ENCODE measurements at regions of chr14 and their contacts with region 1.

Region 1: DNA sequence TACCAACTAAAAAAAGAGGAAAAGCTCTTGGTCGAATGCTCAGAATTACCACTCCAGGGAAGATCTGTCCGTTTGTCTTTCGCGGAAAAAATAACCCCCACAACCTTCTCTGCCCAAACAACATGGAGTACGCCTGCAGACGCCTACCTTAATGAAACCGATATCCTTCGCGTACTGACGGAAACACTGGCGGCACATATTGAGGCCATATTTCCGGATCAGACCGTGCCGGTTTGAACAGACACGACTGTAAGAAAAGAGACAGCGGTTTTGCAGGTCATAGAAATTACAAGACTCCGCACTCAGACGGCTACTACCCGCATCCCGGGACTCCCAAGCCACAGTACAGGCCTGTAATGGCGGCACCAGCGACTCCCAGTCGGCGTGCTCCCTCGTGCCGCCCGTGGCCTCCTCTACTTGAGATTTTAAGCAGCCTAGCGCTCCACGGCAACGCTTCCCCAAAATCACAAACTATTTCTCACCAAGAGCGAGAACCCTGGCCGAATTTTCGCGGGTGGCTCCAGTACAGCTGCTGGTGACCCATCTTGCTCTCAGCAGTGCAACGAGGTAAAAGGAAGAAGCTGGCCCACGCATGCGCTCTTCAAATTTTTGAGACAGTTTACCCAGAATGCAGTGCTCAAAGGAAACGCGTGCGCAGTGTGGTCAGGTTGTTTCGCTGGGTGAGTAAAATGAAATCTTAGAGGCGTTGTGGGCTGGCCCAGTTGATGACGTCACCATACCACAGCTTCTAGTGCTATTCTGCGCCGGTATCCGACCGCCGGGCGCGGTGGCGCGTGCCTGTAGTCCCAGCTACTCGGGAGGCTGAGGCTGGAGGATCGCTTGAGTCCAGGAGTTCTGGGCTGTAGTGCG is at the start of gene RPS29:
- DNase-seq: peak; percentile 89
- H3K4me3 ChIP-seq: peak within 1 kb of the TSS; percentile 72 to 91
- H3K27ac ChIP-seq: peak within 1 kb of the TSS; percentile 82 to 84
- H3K4me1 ChIP-seq: peaks cover 3 to 7% of the 10 kb centered on the region in 2 experiments; a peak in 1 of 4 replicates
- H3K27me3 ChIP-seq: no peaks in the 10 kb centered on the region
- CTCF ChIP-seq: no peak
- EP300 ChIP-seq: peak in 1 of 2 experiments; percentile 28; a peak in 1 of 4 replicates
- RAD21 ChIP-seq: no peak
- polyA plus RNA-seq, gene RPS29: 11,220 and 15,074 TPM in 2 replicates

Region 2: GRCh38 chr14:49427117-49427516 is 158.9 kb before region 1 on chr14:
- CTCF ChIA-PET with region 1: no interaction called
- POLR2A ChIA-PET with region 1: no interaction called
- DNase-seq: no peak
- H3K4me3 ChIP-seq: no peak overlapping the region
- H3K27ac ChIP-seq: no peak overlapping the region
- H3K4me1 ChIP-seq: peaks cover 0 to 3% of the 10 kb centered on the region in 2 experiments; a peak in 1 of 4 replicates
- H3K27me3 ChIP-seq: no peaks in the 10 kb centered on the region
- CTCF ChIP-seq: no peak
- EP300 ChIP-seq: no peak
- RAD21 ChIP-seq: no peak

Region 3: DNA sequence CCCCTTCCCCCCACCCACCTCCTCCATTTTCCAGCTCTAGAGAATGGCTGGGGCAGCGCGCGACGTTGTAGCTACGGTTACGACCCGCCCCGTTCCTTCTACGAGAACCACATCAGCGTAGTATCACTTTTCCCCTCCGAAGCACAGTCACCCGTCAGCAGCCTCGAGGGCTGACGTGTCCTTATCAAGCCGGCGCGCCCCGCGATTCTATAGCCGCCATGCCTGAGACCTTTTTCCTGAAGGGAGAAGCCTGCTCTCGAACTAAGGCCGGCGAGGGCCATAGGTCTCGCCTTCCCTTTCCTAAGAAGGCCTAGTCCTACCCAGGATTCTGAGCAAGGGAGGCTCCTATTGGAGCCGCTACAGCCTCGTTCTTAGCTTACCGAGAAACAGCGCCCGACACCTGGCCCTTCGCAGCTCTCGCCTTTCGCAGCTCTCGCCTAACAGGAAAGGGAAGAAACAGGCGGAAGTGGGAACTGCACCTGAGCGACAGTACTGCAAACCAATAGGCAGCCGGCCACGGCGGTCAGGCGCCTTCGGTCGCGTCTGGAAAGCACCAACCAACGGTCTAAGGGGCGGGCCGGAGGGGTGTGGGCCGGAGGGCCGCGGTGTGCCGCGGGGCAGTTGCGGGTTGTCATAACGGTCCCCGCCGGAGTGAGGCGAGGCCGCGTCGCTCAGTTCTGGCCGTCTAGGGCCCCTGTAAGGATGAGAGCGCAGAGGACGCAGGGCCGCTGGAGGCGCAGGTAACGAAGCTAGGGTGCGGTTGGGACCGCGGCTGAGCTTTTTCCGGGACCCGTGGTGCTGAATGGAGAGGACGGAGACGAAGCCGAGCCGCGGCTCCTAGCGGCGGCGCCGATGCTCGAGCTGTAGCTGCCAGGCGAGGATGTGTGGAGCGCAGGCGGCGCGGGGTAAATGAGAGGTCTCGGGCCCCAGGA is 34.4 kb after region 1 on chr14 and contains the starts of genes MGAT2 and RPL36AL:
- CTCF ChIA-PET with region 1: interaction called, 22 read pairs
- POLR2A ChIA-PET with region 1: interaction called, 6 read pairs
- DNase-seq: peak; percentile 99
- H3K4me3 ChIP-seq: peak within 1 kb of the TSS; percentile 92 to 96
- H3K27ac ChIP-seq: peak within 1 kb of the TSS; percentile 97 to 98
- H3K4me1 ChIP-seq: peaks cover 22 to 29% of the 10 kb centered on the region in 2 experiments
- H3K27me3 ChIP-seq: no peaks in the 10 kb centered on the region
- CTCF ChIP-seq: peak; percentile 45
- EP300 ChIP-seq: no peak
- RAD21 ChIP-seq: no peak
- polyA plus RNA-seq, gene MGAT2: 20.6 and 22.0 TPM in 2 replicates
- polyA plus RNA-seq, gene RPL36AL: 260 and 337 TPM in 2 replicates

Region 4: GRCh38 chr14:49676482-49677082 is 90.5 kb after region 1 on chr14:
- CTCF ChIA-PET with region 1: no interaction called
- POLR2A ChIA-PET with region 1: no interaction called
- DNase-seq: no peak
- H3K4me3 ChIP-seq: no peak overlapping the region
- H3K27ac ChIP-seq: no peak overlapping the region
- H3K4me1 ChIP-seq: no peaks in the 10 kb centered on the region
- H3K27me3 ChIP-seq: no peaks in the 10 kb centered on the region
- CTCF ChIP-seq: no peak
- EP300 ChIP-seq: no peak
- RAD21 ChIP-seq: no peak